ENCODE measurements at regions of chr11 and their contacts with region 1.

Region 1: GRCh38 chr11:14578541-14578956 is 58.4 kb upstream of the PSMA1 start:
- DNase-seq: peak; percentile 45 to 97
- ATAC-seq: peak; percentile 90 to 99 (median 99)
- H3K4me3 ChIP-seq: no peak overlapping the region
- H3K4me3 Mint-ChIP-seq: peak overlapping the region; percentile 78
- H3K27ac ChIP-seq: peak overlapping the region; percentile 96
- H3K27ac Mint-ChIP-seq: peak overlapping the region; percentile 85 to 98
- H3K4me1 ChIP-seq: peaks cover 22% of the 10 kb centered on the region
- H3K4me1 Mint-ChIP-seq: peaks cover 49 to 51% of the 10 kb centered on the region in 2 donors
- H3K27me3 ChIP-seq: no peaks in the 10 kb centered on the region
- H3K27me3 Mint-ChIP-seq: no peaks in the 10 kb centered on the region
- CTCF ChIP-seq: no peak

Region 2: GRCh38 chr11:14499554-14500180 is 78.9 kb before region 1 on chr11 and contains the start of gene COPB1:
- intact Hi-C with region 1: loop called (anchors 1 kb)
- DNase-seq: peak; percentile 93 to 96
- ATAC-seq: peak; percentile 91 to 98 (median 94)
- H3K4me3 ChIP-seq: peak within 1 kb of the TSS; percentile 94
- H3K4me3 Mint-ChIP-seq: peak within 1 kb of the TSS; percentile 98
- H3K27ac ChIP-seq: peak within 1 kb of the TSS; percentile 89
- H3K27ac Mint-ChIP-seq: peak within 1 kb of the TSS; percentile 96 to 97
- H3K4me1 ChIP-seq: peaks cover 4% of the 10 kb centered on the region
- H3K4me1 Mint-ChIP-seq: peaks cover 36 to 46% of the 10 kb centered on the region in 2 donors
- H3K27me3 ChIP-seq: no peaks in the 10 kb centered on the region
- H3K27me3 Mint-ChIP-seq: no peaks in the 10 kb centered on the region
- CTCF ChIP-seq: no peak
- total RNA-seq, gene COPB1: 77.1 to 83.8 (median 80.4) TPM

Region 3: DNA sequence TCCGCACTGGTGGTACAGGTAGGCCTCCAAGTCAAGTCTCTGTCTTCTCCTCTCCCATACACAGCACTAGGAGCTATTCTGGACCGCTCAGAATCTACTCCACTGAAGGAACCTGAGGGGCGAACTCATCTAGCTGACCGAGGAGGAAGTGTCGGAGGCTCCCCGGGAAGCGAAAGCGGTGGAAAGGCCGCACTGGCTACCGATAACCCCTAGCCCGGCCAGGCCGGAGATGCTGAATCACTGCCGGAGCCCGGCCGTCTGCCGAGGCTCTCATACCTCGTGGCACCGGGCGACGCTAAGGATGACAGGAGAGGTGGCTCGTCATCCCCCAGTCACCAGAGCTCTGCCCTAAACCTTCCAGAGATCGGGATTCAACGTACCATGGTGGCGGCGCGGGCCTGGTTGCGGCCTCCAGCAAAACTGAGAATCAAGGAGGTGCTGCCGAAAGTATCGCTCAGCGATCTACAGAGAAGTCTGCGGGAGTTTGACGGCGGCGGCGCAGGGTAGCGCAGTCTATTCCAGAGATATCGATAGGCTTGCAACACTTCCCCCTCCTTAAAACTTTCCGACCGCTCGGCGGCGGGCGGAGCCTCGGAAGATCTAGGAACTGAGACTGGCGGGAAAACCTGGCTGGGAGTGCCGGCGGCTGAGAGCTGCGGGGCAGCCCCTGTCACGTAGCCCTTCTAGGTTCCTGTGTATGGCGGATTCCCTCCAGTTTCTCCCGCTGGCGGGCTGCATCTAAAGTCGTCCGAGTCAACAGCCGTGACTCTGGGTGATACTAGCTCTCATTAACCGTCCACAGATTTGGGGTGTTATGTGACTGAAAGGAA is 58.4 kb before region 1 on chr11 and contains the start of gene PSMA1:
- intact Hi-C with region 1: loop called (anchors 5 kb)
- DNase-seq: peak; percentile 86 to 94
- ATAC-seq: peak; percentile 90 to 98 (median 94)
- H3K4me3 ChIP-seq: peak within 1 kb of the TSS; percentile 77
- H3K4me3 Mint-ChIP-seq: peak within 1 kb of the TSS; percentile 97
- H3K27ac ChIP-seq: peak within 1 kb of the TSS; percentile 87
- H3K27ac Mint-ChIP-seq: peak within 1 kb of the TSS; percentile 95 to 97
- H3K4me1 ChIP-seq: peaks cover 6% of the 10 kb centered on the region
- H3K4me1 Mint-ChIP-seq: peaks cover 26 to 28% of the 10 kb centered on the region in 2 donors
- H3K27me3 ChIP-seq: no peaks in the 10 kb centered on the region
- H3K27me3 Mint-ChIP-seq: no peaks in the 10 kb centered on the region
- CTCF ChIP-seq: no peak
- total RNA-seq, gene PSMA1: 143 to 176 (median 155) TPM

Region 4: GRCh38 chr11:14537134-14537599 is 41.4 kb before region 1 on chr11:
- intact Hi-C with region 1: loop called (anchors 5 kb)
- DNase-seq: peak in 1 of 2 donors; percentile 76
- ATAC-seq: peak; percentile 84 to 91 (median 86)
- H3K4me3 ChIP-seq: no peak overlapping the region
- H3K4me3 Mint-ChIP-seq: no peak overlapping the region
- H3K27ac ChIP-seq: no peak overlapping the region
- H3K27ac Mint-ChIP-seq: peak overlapping the region in 1 of 2 donors; percentile 76
- H3K4me1 ChIP-seq: no peaks in the 10 kb centered on the region
- H3K4me1 Mint-ChIP-seq: no peaks in the 10 kb centered on the region
- H3K27me3 ChIP-seq: no peaks in the 10 kb centered on the region
- H3K27me3 Mint-ChIP-seq: no peaks in the 10 kb centered on the region
- CTCF ChIP-seq: peak; percentile 91

Region 5: GRCh38 chr11:14643697-14644225 is 65.2 kb after region 1 on chr11 and contains the start of gene PDE3B:
- intact Hi-C with region 1: loop called (anchors 2 kb)
- DNase-seq: peak; percentile 66 to 83
- ATAC-seq: peak; percentile 79 to 88 (median 80)
- H3K4me3 ChIP-seq: peak within 1 kb of the TSS; percentile 87
- H3K4me3 Mint-ChIP-seq: peak within 1 kb of the TSS; percentile 81
- H3K27ac ChIP-seq: peak within 1 kb of the TSS; percentile 70
- H3K27ac Mint-ChIP-seq: peak within 1 kb of the TSS in 1 of 2 donors; percentile 86
- H3K4me1 ChIP-seq: peaks cover 12% of the 10 kb centered on the region
- H3K4me1 Mint-ChIP-seq: peaks cover 21 to 31% of the 10 kb centered on the region in 2 donors
- H3K27me3 ChIP-seq: peaks cover 35% of the 10 kb centered on the region
- H3K27me3 Mint-ChIP-seq: peaks cover 11 to 38% of the 10 kb centered on the region in 2 donors
- CTCF ChIP-seq: no peak
- total RNA-seq, gene PDE3B: 18.2 to 42.3 (median 34.5) TPM

Measured in natural killer cell (primary cell).